A549 (cell line): ENCODE measurements at regions of chr3 and their contacts with region 1.

Region 1: GRCh38 chr3:100463002-100463401 is 29.4 kb upstream of the TMEM45A start:
- DNase-seq: peak; percentile 53 to 67
- ATAC-seq: peak; percentile 98
- H3K4me3 ChIP-seq: no peak overlapping the region
- H3K27ac ChIP-seq: no peak overlapping the region
- H3K4me1 ChIP-seq: no peaks in the 10 kb centered on the region
- CTCF ChIP-seq: peak; percentile 92
- EP300 ChIP-seq: no peak
- POLR2A ChIP-seq: no peak
- RAD21 ChIP-seq: peak; percentile 94 to 96

Region 2: DNA sequence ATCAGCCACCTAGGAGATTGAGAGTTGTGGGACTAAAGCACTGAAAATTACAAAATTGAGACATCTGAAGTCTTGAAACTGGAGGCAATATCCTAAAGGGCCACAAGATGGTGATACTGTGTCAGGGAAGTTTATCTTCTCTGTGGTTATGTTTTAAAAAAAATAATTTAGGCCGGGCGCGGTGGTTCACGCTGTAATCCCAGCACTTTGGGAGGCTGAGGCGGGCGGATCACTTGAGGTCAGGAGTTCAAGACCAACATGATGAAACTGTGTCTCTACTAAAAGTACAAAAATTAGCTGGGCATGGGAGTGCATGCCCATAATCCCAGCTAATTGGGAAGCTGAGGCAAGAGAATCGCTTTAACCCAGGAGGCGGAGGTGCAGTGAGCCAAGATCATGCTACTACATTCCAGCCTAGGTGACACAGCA is 146.3 kb before region 1 on chr3:
- CTCF ChIA-PET with region 1: interaction called, 11 read pairs
- POLR2A ChIA-PET with region 1: no interaction called
- DNase-seq: peak; percentile 25 to 71
- ATAC-seq: peak; percentile 64 to 90; a peak in 4 of 6 replicates
- H3K4me3 ChIP-seq: no peak overlapping the region
- H3K27ac ChIP-seq: peak overlapping the region in 1 of 2 experiments; percentile 53; a peak in 1 of 6 replicates
- H3K4me1 ChIP-seq: peaks cover 3% of the 10 kb centered on the region; the same call in 1 of the 3 replicates
- CTCF ChIP-seq: peak; percentile 69
- EP300 ChIP-seq: no peak
- POLR2A ChIP-seq: no peak
- RAD21 ChIP-seq: peak; percentile 74 to 79

Region 3: GRCh38 chr3:100483529-100483928 is 20.5 kb after region 1 on chr3:
- CTCF ChIA-PET with region 1: interaction called, 11 read pairs
- POLR2A ChIA-PET with region 1: no interaction called
- DNase-seq: no peak
- ATAC-seq: no peak
- H3K4me3 ChIP-seq: no peak overlapping the region
- H3K27ac ChIP-seq: no peak overlapping the region
- H3K4me1 ChIP-seq: no peaks in the 10 kb centered on the region
- CTCF ChIP-seq: no peak
- EP300 ChIP-seq: no peak
- POLR2A ChIP-seq: no peak
- RAD21 ChIP-seq: no peak

Region 4: DNA sequence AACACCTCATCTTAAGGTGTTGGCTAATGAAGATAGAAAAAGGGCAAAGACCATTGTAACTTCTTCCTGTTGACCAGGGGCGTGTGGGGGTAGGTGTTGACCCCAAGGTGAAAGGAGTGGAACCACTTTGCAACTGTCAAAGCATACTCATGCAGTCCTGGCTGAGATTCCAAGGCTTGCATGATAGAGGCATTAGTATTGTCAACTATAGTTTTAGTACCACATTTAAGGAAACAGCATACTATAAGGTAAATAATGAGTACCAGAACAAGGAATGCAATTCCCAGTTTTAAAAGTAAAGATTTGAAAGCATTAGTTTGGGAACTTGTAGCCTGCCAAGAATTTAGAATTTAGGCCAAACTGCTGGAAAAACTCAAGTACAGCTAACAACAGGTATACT is 118.6 kb after region 1 on chr3:
- CTCF ChIA-PET with region 1: interaction called, 130 read pairs
- POLR2A ChIA-PET with region 1: no interaction called
- DNase-seq: no peak
- ATAC-seq: no peak
- H3K4me3 ChIP-seq: no peak overlapping the region
- H3K27ac ChIP-seq: no peak overlapping the region
- H3K4me1 ChIP-seq: peaks cover 4% of the 10 kb centered on the region; the same call in 2 of the 3 replicates
- CTCF ChIP-seq: no peak
- EP300 ChIP-seq: no peak
- POLR2A ChIP-seq: no peak
- RAD21 ChIP-seq: no peak

Region 5: DNA sequence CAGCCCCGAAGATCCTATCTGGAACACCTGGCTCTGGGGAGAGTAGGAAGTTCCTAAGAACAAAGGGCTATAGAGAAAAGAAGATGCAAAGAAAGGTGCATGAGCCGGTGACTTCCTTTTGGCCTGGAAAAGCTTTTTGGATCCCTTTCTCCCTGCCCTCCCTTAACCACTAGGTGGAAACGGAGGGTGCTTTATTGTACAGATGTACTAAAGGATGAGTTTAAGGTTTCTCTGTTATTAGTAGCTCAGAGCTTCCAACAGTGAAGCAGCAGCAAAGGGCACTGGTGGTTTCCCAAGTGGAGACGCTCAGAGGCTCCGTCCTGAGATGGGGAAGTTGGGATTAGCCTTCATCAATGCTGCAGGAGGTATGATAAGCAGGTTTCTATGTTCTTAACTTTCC is 140.5 kb after region 1 on chr3:
- CTCF ChIA-PET with region 1: interaction called, 16 read pairs
- POLR2A ChIA-PET with region 1: no interaction called
- DNase-seq: peak; percentile 27 to 59
- ATAC-seq: peak; percentile 94 to 96
- H3K4me3 ChIP-seq: no peak overlapping the region
- H3K27ac ChIP-seq: peak overlapping the region; percentile 33 to 58; a peak in 4 of 6 replicates
- H3K4me1 ChIP-seq: peaks cover 19% of the 10 kb centered on the region
- CTCF ChIP-seq: peak; percentile 41; the same call in 2 of the 3 replicates
- EP300 ChIP-seq: no peak
- POLR2A ChIP-seq: no peak
- RAD21 ChIP-seq: peak; percentile 60 to 62